Posterior cingulate gyrus (tissue), 11 donors: ENCODE measurements at regions of chr1 and their contacts with region 1.

Region 1: GRCh38 chr1:171801487-171801891 is 20.0 kb downstream of the METTL13 start:
- DNase-seq: no peak

Region 2: DNA sequence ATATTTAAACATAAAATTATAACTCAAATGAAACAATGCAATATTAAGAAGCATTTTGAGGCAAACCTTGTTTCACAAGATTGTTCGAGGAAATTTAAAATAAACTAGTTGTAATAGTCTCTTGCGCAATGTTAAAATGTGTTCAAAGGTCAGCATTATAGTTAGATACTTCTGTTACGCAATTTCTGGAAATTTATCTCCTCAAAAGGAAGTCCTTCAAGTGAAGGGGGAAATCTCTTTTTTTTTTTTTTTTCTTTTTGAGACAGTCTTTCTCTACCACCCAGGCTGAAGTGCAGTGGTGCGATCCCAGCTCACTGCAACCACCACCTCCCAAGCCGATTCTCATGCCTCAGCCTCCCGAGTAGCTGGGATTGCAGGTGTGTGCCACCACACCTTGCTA is 435.4 kb before region 1 on chr1:
- intact Hi-C with region 1: no loop called
- DNase-seq: no peak

Region 3: DNA sequence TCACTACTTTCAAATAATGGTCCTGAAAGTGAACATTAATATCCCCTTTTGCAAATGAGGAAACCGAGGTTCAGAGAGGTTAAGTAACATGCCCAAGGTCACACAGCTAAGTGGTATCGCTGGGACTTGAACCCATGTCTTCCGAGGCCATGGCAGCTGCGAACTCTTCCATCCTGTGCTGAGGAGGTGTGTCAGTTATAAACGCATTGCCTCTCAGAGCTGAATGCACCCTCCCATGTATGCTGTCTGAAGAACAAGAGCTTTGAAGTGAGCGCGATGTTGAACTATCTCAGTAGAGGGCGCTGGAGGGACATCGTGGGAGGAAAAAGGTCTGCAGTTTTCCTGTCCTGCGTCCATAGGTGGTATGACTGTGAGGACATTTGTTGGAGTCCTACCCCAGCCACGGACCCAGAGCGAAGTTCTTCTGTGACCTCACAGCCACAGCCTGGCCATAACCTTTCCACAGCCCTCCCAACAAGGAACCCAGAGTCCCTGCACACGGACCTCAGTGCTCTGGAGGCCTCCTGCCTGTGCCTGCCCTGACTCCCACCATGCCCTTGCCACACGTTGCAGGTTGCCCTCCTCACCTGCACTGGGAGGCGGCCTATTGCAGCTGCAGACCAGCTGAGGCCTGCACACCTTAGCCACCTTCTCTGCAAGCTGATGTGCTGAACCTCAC is 156.5 kb before region 1 on chr1:
- intact Hi-C with region 1: no loop called
- DNase-seq: peak in 9 of 10 donors; percentile 32 to 94 (median 68)

Region 4: GRCh38 chr1:171715813-171716251 is 85.7 kb before region 1 on chr1:
- intact Hi-C with region 1: no loop called
- DNase-seq: no peak

Region 5: GRCh38 chr1:171769171-171769570 is 32.3 kb before region 1 on chr1:
- intact Hi-C with region 1: no loop called
- DNase-seq: no peak

Region 6: DNA sequence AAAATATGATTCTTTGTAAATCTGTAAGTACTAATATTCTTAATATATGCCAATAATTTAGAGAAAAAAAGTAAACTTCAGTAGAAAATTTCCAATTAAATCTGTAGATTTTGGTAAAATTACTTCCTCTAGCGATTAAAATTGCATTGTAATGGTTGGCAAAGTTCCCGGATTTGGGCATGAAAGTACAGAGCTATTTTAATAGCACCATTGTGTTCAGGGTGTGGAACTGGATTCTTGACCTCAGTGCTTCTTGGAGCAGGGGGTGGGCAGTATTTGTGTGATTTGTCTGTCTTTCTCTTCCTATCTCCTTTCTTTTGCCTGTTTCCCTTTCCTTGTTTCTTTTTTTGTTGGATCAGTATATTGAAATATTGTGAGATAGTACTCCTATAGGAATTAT is 111.9 kb after region 1 on chr1:
- intact Hi-C with region 1: loop called (anchors 5 kb)
- DNase-seq: peak in 1 of 10 donors; percentile 38

Region 7: DNA sequence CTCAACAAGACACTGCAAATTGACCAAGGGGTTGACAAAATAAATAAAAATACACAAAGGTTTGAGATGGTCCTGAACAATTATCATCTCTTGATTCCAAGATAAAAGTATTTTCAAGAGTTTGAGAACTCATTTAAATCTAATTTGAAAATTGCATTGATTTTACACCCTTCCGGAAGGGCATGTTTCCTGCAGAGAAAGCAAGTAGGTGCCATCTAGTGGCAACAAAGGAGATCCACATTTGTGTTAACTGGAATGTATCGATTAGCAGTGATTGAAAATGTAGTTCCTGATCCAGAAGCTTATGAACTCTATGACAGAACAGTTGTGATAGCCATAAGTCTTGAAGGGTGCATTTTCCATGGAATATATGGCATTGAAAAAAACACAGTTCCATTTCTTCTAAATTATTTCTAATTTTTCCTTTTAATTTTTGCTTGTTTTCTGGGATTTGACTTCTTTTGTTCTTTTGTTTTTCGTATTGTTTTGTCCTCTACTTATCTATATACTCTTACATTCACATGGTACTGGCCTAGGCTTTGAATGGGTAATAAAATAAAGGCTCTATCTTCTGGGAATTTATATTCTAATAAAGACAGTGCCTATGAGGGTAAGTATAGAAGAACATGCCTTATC is 183.5 kb after region 1 on chr1:
- intact Hi-C with region 1: loop called (anchors 1 kb)
- DNase-seq: no peak

Region 8: DNA sequence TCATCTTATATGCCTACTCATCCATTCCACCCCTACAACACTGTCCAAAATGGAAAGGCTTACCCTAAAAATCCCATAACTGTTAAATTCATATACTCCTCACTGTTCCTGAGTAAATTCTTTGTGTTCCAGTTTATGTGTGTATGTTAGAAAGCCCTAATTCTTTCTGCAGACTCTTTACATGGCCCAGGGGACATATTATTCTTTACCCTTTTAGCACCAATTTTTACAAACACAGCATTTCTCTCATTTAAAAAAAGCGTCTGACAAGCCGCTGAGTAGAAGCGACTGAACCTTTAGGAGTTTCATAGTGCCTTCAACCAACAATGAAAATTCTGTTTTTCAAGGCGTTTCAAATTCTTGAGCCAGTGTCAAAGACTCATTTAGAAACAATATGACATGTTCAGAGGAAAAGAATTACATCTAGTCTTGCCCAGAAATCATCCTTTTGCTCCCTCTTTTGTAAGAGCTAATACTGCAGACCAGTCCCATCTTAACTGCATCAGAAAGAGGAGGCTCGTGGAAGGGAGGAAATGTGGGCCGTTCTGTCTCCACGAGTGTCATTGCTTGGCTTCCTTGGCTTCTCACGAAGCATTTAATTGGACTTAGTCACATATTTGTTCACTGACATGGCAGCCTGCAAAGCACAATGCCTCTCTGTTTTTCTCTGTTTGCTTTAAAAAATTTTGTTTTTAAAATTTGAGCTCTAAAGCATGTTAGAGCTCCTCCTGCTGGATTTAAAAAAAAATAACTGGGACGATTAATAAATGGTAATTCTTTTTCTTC is 597.7 kb after region 1 on chr1:
- intact Hi-C with region 1: loop called (anchors 5 kb)
- DNase-seq: peak in 8 of 10 donors; percentile 15 to 84 (median 51)